ENCODE measurements at regions of chr12 and their contacts with region 1.

Region 1: DNA sequence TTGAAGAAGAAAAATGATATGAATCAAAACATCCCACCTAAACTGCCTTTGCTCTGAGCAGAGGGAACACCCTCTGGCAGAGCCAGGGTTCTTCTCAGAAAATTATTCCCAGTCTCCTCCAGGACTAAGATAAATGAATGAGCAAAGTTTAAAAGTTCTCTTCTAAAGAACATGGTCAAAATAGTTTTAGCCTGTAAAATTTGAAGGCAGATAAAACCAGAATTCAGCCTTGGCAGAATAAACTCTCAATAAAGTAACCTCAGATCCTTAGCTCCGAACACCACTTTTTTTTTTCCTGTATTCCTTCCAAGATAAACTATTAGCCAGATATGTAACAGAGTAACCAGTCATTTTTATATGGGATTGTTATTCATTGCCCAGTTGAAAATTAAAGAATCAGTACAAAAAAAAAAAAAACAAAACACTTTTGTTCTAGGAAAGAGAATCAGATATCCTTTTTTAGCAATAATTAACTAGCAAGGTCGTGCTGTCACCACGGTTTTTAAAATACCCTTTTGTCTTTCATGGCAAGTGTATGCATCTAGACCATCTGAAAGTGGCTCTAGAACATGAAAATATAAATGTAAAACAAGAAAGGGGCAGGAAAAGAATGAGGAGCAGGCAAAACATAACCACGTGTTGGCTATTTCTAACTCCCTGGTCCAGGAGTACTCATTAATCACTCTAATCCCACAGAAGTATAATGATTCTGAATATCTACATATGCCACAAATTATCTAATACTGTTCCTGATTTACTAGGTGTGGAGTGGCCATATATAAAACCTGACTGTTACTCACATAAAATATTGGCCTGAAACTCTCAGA is 60.8 kb downstream of the CAPZA3 start:
- DNase-seq: peak; percentile 25
- H3K4me3 Mint-ChIP-seq: peak overlapping the region; percentile 22
- H3K27ac Mint-ChIP-seq: peak overlapping the region; percentile 74
- H3K4me1 Mint-ChIP-seq: peaks cover 33% of the 10 kb centered on the region
- H3K27me3 Mint-ChIP-seq: no peaks in the 10 kb centered on the region
- CTCF ChIP-seq: no peak

Region 2: GRCh38 chr12:18250313-18250916 is 548.3 kb before region 1 on chr12:
- CTCF ChIA-PET with region 1: no interaction called
- intact Hi-C with region 1: loop called (anchors 5 kb)
- DNase-seq: peak; percentile 56
- H3K4me3 Mint-ChIP-seq: no peak overlapping the region
- H3K27ac Mint-ChIP-seq: no peak overlapping the region
- H3K4me1 Mint-ChIP-seq: peaks cover 24% of the 10 kb centered on the region
- H3K27me3 Mint-ChIP-seq: no peaks in the 10 kb centered on the region
- CTCF ChIP-seq: peak; percentile 48

Region 3: GRCh38 chr12:18591473-18591872 is 207.3 kb before region 1 on chr12:
- CTCF ChIA-PET with region 1: no interaction called
- intact Hi-C with region 1: loop called (anchors 1 kb)
- DNase-seq: no peak
- H3K4me3 Mint-ChIP-seq: no peak overlapping the region
- H3K27ac Mint-ChIP-seq: no peak overlapping the region
- H3K4me1 Mint-ChIP-seq: no peaks in the 10 kb centered on the region
- H3K27me3 Mint-ChIP-seq: no peaks in the 10 kb centered on the region
- CTCF ChIP-seq: no peak

Region 4: GRCh38 chr12:18690653-18691052 is 108.1 kb before region 1 on chr12:
- CTCF ChIA-PET with region 1: no interaction called
- intact Hi-C with region 1: loop called (anchors 10 kb)
- DNase-seq: peak; percentile 37
- H3K4me3 Mint-ChIP-seq: no peak overlapping the region
- H3K27ac Mint-ChIP-seq: peak overlapping the region; percentile 46
- H3K4me1 Mint-ChIP-seq: peaks cover 12% of the 10 kb centered on the region
- H3K27me3 Mint-ChIP-seq: no peaks in the 10 kb centered on the region
- CTCF ChIP-seq: no peak

Region 5: DNA sequence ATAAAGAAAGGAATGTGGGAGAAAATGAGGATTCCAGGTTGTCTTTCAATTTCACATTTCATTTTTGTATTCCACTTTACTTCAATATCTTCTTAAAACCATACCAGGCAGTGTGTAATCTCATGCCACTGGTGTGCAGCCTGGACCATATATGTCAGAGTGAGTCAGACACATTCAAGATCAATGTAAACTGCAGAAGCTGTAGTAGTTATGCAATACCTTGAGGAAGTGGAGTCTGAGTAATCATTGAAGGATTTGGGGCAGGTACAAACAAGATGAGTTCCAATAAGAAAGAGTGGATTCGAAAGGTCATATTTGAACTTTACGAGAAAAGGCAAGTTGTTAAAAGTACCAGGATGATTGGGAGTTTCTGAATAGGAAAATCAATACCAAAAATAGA is 75.0 kb before region 1 on chr12:
- CTCF ChIA-PET with region 1: no interaction called
- intact Hi-C with region 1: loop called (anchors 10 kb)
- DNase-seq: peak; percentile 31
- H3K4me3 Mint-ChIP-seq: peak overlapping the region; percentile 42
- H3K27ac Mint-ChIP-seq: peak overlapping the region; percentile 67
- H3K4me1 Mint-ChIP-seq: peaks cover 48% of the 10 kb centered on the region
- H3K27me3 Mint-ChIP-seq: no peaks in the 10 kb centered on the region
- CTCF ChIP-seq: no peak

Region 6: GRCh38 chr12:18882690-18883089 is 83.9 kb after region 1 on chr12:
- CTCF ChIA-PET with region 1: no interaction called
- intact Hi-C with region 1: no loop called
- DNase-seq: no peak
- H3K4me3 Mint-ChIP-seq: no peak overlapping the region
- H3K27ac Mint-ChIP-seq: no peak overlapping the region
- H3K4me1 Mint-ChIP-seq: no peaks in the 10 kb centered on the region
- H3K27me3 Mint-ChIP-seq: no peaks in the 10 kb centered on the region
- CTCF ChIP-seq: no peak